ENCODE measurements at regions of chr1 and their contacts with region 1.

Region 1: GRCh38 chr1:87953732-87954344 is 625.2 kb downstream of the LMO4 start:
- DNase-seq: peak; percentile 61
- ATAC-seq: peak; percentile 91
- H3K4me3 ChIP-seq: no peak overlapping the region
- H3K27ac ChIP-seq: no peak overlapping the region
- H3K4me1 ChIP-seq: peaks cover 0 to 9% of the 10 kb centered on the region in 2 experiments; a peak in 2 of 4 replicates
- H3K27me3 ChIP-seq: no peaks in the 10 kb centered on the region
- CTCF ChIP-seq: peak; percentile 73 to 89 (median 87)
- POLR2A ChIP-seq: no peak
- RAD21 ChIP-seq: peak; percentile 85

Region 2: GRCh38 chr1:87131809-87132283 is 822.0 kb before region 1 on chr1:
- CTCF ChIA-PET with region 1: no interaction called
- POLR2A ChIA-PET with region 1: no interaction called
- RAD21 ChIA-PET with region 1: no interaction called
- intact Hi-C with region 1: loop called (anchors 1 kb)
- DNase-seq: peak; percentile 35
- ATAC-seq: peak; percentile 99
- H3K4me3 ChIP-seq: peak overlapping the region; percentile 21 to 39; a peak in 3 of 4 replicates
- H3K27ac ChIP-seq: no peak overlapping the region
- H3K4me1 ChIP-seq: peaks cover 0 to 4% of the 10 kb centered on the region in 2 experiments; a peak in 1 of 4 replicates
- H3K27me3 ChIP-seq: no peaks in the 10 kb centered on the region
- CTCF ChIP-seq: peak; percentile 64 to 89 (median 85)
- POLR2A ChIP-seq: no peak
- RAD21 ChIP-seq: peak; percentile 95

Region 3: GRCh38 chr1:87292684-87293493 is 660.9 kb before region 1 on chr1:
- CTCF ChIA-PET with region 1: interaction called, 7 read pairs
- POLR2A ChIA-PET with region 1: no interaction called
- RAD21 ChIA-PET with region 1: interaction called in 1 of 2 experiments, 3 read pairs
- intact Hi-C with region 1: loop called (anchors 1 kb)
- DNase-seq: peak; percentile 36
- ATAC-seq: peak; percentile 82
- H3K4me3 ChIP-seq: no peak overlapping the region
- H3K27ac ChIP-seq: no peak overlapping the region
- H3K4me1 ChIP-seq: no peaks in the 10 kb centered on the region
- H3K27me3 ChIP-seq: no peaks in the 10 kb centered on the region
- CTCF ChIP-seq: peak; percentile 61 to 86 (median 65); a peak in 5 of 6 replicates
- POLR2A ChIP-seq: no peak
- RAD21 ChIP-seq: peak; percentile 84

Region 4: DNA sequence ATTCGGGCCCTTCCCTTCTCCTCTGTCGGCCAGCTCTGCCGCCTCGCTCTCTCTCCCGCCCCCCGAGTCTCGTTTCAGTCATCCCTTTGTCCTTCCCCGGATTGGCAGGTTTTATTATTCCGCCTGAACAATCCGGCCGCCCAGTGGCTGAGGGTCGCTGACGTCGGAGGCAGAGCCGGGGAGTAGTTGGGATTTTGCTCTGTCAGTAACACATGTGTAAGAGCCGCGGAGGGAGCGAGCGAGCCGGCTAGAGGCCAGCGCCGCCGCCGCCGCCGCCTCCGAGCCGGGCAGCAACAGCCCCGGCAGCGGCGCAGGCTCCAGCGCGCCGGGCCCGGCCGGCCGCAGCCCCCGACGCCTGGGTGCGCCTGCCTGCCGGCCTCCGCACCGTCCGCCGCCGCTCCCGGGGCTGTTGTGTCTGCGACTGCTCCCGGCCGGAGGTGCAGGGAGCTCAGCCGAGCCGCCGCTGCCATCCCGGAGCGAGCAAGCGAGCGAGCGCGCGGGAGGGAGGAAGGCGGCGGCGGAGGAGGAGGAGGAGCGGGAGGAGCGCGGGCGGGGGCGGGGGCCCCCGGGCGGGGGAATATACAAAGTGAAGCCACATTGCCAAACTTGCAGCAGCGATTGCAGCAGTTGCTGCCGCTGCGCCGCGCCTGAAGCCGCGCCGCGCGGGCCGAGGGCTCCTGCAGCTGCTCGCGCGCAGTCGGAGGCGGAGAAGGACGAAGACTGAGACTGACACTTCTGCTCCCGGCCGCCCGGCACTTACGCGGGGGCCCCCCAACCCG is 625.4 kb before region 1 on chr1 and contains the start of gene LMO4:
- CTCF ChIA-PET with region 1: interaction called, 4 read pairs
- POLR2A ChIA-PET with region 1: interaction called, 4 read pairs
- RAD21 ChIA-PET with region 1: no interaction called
- intact Hi-C with region 1: loop called (anchors 2 kb)
- DNase-seq: peak; percentile 93
- ATAC-seq: peak; percentile 78
- H3K4me3 ChIP-seq: peak within 1 kb of the TSS; percentile 75 to 79
- H3K27ac ChIP-seq: peak within 1 kb of the TSS; percentile 77
- H3K4me1 ChIP-seq: peaks cover 16 to 42% of the 10 kb centered on the region in 2 experiments
- H3K27me3 ChIP-seq: no peaks in the 10 kb centered on the region
- CTCF ChIP-seq: no peak
- POLR2A ChIP-seq: peak; percentile 68
- RAD21 ChIP-seq: no peak
- total RNA-seq, gene LMO4: 38.5 TPM

Region 5: GRCh38 chr1:87673748-87674147 is 280.1 kb before region 1 on chr1:
- CTCF ChIA-PET with region 1: interaction called, 5 read pairs
- POLR2A ChIA-PET with region 1: interaction called, 3 read pairs
- RAD21 ChIA-PET with region 1: no interaction called
- intact Hi-C with region 1: loop called (anchors 10 kb)
- DNase-seq: no peak
- ATAC-seq: peak; percentile 49; the same call in 1 of the 2 replicates
- H3K4me3 ChIP-seq: no peak overlapping the region
- H3K27ac ChIP-seq: no peak overlapping the region
- H3K4me1 ChIP-seq: no peaks in the 10 kb centered on the region
- H3K27me3 ChIP-seq: no peaks in the 10 kb centered on the region
- CTCF ChIP-seq: no peak; a peak in 1 of 6 replicates
- POLR2A ChIP-seq: no peak
- RAD21 ChIP-seq: peak; percentile 39

Region 6: GRCh38 chr1:87794788-87795614 is 158.8 kb before region 1 on chr1:
- CTCF ChIA-PET with region 1: interaction called, 4 read pairs
- POLR2A ChIA-PET with region 1: no interaction called
- RAD21 ChIA-PET with region 1: no interaction called
- intact Hi-C with region 1: loop called (anchors 10 kb)
- DNase-seq: peak; percentile 55
- ATAC-seq: peak; percentile 89
- H3K4me3 ChIP-seq: peak overlapping the region in 1 of 2 experiments; percentile 37; a peak in 2 of 4 replicates
- H3K27ac ChIP-seq: peak overlapping the region; percentile 61
- H3K4me1 ChIP-seq: peaks cover 23 to 35% of the 10 kb centered on the region in 2 experiments
- H3K27me3 ChIP-seq: no peaks in the 10 kb centered on the region
- CTCF ChIP-seq: no peak
- POLR2A ChIP-seq: no peak
- RAD21 ChIP-seq: no peak

Region 7: DNA sequence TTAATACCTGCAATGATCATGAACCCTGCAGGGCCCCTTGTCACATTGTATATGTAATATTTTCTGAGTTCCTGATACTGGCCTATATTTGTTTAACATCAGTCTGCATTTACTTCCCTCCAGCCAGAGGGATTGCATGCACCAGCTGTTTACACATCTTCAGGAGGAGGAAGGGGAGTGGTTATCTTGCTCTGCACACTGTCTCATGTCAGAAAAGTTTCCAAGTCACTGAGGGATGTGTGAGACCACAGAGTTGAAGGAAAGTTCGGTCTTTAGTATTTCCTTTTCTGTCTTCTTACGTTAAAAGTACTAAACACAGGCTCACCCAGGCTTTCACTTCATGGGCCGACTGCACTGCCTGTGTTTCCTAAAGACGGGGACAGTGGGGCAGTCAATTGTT is 51.0 kb before region 1 on chr1:
- CTCF ChIA-PET with region 1: no interaction called
- POLR2A ChIA-PET with region 1: no interaction called
- RAD21 ChIA-PET with region 1: no interaction called
- intact Hi-C with region 1: no loop called
- DNase-seq: no peak
- ATAC-seq: no peak
- H3K4me3 ChIP-seq: no peak overlapping the region
- H3K27ac ChIP-seq: no peak overlapping the region
- H3K4me1 ChIP-seq: no peaks in the 10 kb centered on the region
- H3K27me3 ChIP-seq: no peaks in the 10 kb centered on the region
- CTCF ChIP-seq: no peak
- POLR2A ChIP-seq: no peak
- RAD21 ChIP-seq: no peak

Measured in HCT116 (cell line).